ENCODE measurements at regions of chr4 and their contacts with region 1.

Region 1: DNA sequence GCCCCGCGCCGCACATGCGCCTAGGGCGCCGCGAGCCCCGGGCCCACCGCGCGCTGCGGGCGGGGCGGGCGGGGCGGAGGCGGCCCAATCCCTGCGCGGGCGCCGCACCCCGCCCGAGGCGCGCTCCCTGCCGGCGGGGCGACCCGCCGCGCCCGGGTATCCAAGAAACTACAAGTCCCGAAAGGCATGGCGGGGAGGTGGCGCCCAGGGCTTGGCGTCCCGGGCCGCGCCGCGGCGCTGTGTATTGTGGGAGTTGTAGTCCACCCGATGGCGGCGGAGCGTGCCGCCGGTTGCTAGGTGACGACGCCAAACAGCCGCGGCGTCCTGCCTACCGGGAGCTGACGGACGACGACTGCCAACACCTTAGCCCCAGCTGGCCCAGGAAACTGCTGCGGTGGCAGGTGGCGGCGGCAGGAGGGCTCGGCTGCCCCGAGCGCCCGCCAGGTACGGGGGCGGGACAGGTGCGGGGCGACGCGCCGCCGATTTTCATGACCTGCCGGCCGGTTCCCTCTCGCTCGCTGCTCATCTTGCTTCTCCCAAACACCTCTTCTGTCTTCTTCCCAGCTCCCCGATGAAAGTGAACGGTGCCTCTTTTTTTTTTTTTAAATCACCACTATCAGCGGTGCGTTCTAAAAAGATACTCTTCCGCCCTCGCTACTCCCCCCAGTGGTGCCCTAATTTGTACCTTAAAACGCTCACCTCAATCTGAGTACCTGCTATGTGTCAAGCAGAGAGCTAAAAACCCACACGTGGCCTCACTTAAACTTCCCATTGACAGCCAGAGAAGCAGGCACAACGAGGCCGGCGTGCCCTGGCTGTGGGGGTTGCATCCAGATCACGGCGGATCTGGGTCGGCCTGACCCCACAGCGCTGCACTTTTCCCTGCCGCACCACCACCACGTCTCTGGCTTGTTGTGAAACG is at the start of gene CFAP99:
- DNase-seq: peak; percentile 94
- H3K4me3 Mint-ChIP-seq: peak within 1 kb of the TSS; percentile 88
- H3K27ac Mint-ChIP-seq: peak within 1 kb of the TSS; percentile 15
- H3K4me1 Mint-ChIP-seq: peaks cover 31% of the 10 kb centered on the region
- H3K27me3 Mint-ChIP-seq: peaks cover 48% of the 10 kb centered on the region
- total RNA-seq, gene CFAP99: not detected in 2 replicates

Region 2: DNA sequence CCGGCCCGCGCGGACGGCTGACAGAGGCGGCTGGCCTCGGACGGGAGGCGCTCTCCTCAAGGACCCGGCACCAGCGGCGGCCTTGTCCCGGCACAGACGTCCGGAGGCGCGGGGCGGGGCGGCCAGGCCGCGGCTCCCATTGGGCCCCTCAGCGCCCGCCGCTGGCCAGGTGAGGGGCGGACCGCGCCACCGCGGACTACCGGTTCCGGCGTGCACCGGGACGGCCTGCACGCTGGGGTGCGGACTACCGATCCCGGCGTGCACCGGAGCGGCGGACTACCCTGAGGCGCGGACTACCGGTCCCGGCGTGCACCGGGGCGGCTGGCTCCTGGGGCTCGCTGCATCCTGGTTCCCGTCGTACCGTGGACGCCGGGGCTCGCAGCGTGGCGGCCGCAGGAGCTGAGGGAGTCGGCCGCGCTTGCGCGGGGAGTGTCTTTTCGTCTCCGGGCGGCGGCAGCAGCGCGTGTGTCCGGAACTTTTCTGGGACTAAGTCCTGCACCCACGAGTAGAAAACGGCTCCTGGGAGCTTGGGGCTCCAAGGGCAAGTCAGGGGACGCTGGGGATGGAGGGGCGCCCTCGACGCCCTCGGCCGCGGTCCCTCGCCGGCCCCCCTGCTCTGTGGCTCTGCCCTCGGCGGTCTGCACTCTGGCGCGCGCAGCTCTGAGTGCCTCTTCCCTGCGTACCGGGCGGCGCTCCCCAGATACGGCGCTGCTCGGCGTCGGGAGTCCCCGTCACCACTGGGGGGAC is 562.7 kb before region 1 on chr4 and contains the start of gene LETM1:
- intact Hi-C with region 1: loop called (anchors 2 kb)
- DNase-seq: peak; percentile 93
- H3K4me3 Mint-ChIP-seq: peak within 1 kb of the TSS; percentile 86
- H3K27ac Mint-ChIP-seq: peak within 1 kb of the TSS; percentile 70
- H3K4me1 Mint-ChIP-seq: peaks cover 32% of the 10 kb centered on the region
- H3K27me3 Mint-ChIP-seq: no peaks in the 10 kb centered on the region
- total RNA-seq, gene LETM1: 76.6 and 78.6 TPM in 2 replicates

Region 3: DNA sequence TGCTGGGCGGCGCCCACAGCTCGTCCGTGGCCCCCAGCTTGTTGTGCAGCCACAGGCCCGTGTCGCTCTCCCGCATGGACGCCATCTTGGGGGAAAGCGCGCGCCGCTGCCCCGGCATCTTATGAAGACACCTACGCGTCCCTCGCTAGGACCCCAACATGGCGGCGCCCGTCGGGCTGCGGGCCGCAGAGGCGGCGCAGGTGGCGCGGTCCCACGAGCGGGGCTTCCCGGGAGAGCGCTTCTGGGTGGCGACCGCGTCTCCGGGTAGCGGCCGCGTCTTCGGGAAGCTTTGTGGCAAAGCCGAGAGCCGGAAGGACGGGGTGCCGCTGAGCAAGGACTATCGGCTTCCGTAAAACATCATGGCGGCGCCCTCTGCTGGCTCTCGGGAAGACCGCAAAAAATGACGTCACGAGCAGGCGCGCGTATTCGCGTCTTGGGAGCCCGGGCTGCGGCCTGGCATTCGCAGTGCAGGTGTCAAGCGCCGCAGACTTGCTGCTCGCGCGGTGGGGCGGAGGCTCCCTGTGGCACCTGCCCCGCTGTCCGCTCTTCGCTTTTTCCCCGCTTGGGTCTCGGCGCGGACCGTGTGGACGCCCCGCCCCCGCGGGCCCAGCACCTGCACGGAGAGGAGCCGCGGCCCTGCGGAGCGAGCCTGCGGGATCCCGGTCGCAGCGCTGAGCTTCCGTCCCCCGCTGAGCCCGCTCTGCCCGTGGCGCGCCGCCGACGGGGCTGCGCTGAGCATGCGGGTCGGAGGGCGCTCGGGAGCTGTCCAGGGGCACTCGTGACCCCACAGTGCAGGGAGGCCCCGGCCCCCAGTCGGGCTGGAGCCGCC is 409.8 kb before region 1 on chr4 and contains the start of gene NELFA:
- intact Hi-C with region 1: loop called (anchors 1 kb)
- DNase-seq: peak; percentile 92
- H3K4me3 Mint-ChIP-seq: peak within 1 kb of the TSS; percentile 90
- H3K27ac Mint-ChIP-seq: peak within 1 kb of the TSS; percentile 86
- H3K4me1 Mint-ChIP-seq: peaks cover 29% of the 10 kb centered on the region
- H3K27me3 Mint-ChIP-seq: peaks cover 6% of the 10 kb centered on the region
- total RNA-seq, gene NELFA: 48.3 and 49.4 TPM in 2 replicates

Region 4: DNA sequence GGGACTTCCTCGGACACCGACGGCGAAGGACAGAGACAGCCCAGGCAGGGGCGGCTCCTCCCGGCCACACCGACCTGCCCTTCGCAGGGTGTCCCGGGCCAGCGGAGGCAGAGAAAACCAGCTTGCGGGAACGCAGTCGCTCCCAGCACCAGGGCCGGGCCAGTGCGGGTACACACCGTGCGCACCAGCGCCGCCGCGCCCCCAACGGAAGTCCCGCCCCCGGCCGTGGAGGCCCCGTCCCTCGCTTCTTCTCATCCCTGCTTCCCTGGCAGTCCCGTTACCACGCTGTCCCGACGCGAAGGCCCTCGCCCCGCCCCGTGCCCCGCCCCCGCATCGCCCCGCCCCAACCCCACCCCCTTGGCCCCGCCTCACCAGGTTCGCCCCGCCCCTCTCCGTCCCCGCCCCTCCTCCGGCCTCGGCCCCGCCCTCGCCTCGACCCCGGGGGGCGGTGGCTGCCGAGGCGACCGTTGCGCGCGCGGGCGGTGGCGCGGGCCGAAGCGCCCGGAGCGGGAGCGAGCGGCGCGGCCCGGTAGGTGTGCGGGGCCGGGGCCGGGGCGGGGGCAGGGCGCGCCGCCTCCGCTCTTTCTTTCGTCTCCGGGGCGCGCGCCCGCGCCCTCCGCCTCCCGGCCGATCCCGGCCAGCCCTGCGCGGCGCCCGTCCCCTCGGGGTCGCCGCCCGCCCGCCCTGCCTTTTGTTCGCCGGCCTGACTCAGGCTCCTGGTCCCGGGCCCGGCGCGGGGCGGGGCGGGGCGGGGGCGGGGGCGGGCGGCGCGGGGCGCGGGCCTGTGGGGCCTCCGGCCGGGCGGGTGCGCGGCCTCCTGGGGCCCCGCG is 873.9 kb after region 1 on chr4 and contains the start of gene RGS12:
- intact Hi-C with region 1: loop called (anchors 10 kb)
- DNase-seq: peak; percentile 82
- H3K4me3 Mint-ChIP-seq: peak within 1 kb of the TSS; percentile 88
- H3K27ac Mint-ChIP-seq: peak within 1 kb of the TSS; percentile 46
- H3K4me1 Mint-ChIP-seq: peaks cover 10% of the 10 kb centered on the region
- H3K27me3 Mint-ChIP-seq: peaks cover 38% of the 10 kb centered on the region
- total RNA-seq, gene RGS12: 7.0 and 8.3 TPM in 2 replicates

Region 5: DNA sequence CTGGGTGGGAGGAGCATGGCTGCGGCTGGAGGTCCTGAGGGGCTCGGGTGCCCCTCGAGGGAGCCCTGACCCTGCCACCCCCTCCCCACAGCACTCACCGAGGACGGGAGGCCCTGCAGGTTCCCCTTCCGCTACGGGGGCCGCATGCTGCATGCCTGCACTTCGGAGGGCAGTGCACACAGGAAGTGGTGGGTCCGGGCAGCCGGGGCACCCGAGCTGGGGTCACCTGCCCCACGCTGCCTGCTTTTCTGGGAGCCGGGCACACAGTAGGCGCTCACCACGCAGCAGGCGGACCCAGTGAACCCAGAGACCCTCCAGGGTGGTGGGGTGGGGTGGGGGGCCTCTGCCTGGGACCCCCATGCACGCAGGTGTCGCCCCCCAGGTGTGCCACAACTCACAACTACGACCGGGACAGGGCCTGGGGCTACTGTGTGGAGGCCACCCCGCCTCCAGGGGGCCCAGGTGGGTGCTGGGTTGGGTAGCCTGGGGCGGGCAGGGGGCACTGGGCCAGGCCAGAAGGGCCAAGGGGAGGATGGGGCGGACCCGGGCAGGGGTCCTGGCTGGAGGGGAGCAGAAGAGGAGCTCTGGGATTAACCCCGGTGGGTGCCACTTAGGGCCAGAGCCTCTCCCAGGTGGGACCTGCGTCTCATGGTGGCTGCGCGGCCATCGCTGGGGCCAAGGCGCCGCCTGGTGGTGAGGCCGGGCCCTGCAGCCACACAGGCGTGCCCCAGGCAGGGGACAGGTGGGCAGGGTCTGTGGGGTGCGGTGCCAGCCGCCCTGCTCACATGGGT is 1024.2 kb after region 1 on chr4:
- intact Hi-C with region 1: no loop called
- DNase-seq: peak; percentile 51
- H3K4me3 Mint-ChIP-seq: no peak overlapping the region
- H3K27ac Mint-ChIP-seq: no peak overlapping the region
- H3K4me1 Mint-ChIP-seq: no peaks in the 10 kb centered on the region
- H3K27me3 Mint-ChIP-seq: no peaks in the 10 kb centered on the region